CD8-positive, alpha-beta T cell (primary cell): ENCODE measurements at regions of chr20 and their contacts with region 1.

Region 1: GRCh38 chr20:7673841-7674240 is 266.4 kb downstream of the HAO1 start:
- DNase-seq: no peak
- ATAC-seq: no peak
- H3K4me3 ChIP-seq: no peak overlapping the region
- H3K4me3 Mint-ChIP-seq: no peak overlapping the region
- H3K27ac ChIP-seq: no peak overlapping the region
- H3K27ac Mint-ChIP-seq: no peak overlapping the region
- H3K4me1 ChIP-seq: no peaks in the 10 kb centered on the region
- H3K4me1 Mint-ChIP-seq: no peaks in the 10 kb centered on the region
- H3K27me3 ChIP-seq: no peaks in the 10 kb centered on the region
- H3K27me3 Mint-ChIP-seq: no peaks in the 10 kb centered on the region
- CTCF ChIP-seq: no peak

Region 2: DNA sequence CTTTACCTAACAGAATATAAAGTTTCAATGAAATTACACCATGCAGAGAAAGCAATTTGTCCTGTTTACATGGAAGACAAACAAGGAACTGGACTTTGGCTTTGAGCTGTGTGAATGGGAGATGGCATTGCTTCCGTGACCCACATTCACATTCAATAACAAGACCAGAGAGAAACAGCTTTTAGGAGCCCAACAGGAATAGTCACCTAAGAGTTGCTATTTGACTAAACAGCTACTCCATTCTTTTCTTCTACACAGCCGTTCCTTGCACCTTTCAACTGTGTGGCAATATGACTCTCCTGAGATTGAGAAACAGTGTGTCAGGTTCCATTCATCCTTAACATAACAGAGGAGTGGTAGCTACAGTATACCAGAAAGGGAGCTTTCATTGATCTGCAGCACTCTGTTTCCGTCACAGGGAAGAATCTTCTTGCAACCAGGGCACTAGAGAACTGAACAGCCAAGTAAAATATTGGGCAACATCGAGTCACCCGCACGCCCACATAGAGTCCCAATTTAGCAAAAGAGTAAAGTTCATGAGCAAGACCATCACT is 88.6 kb before region 1 on chr20:
- CTCF ChIA-PET with region 1: no interaction called
- POLR2A ChIA-PET with region 1: no interaction called
- intact Hi-C with region 1: no loop called
- DNase-seq: no peak
- ATAC-seq: no peak
- H3K4me3 ChIP-seq: no peak overlapping the region
- H3K4me3 Mint-ChIP-seq: no peak overlapping the region
- H3K27ac ChIP-seq: no peak overlapping the region
- H3K27ac Mint-ChIP-seq: no peak overlapping the region
- H3K4me1 ChIP-seq: no peaks in the 10 kb centered on the region
- H3K4me1 Mint-ChIP-seq: no peaks in the 10 kb centered on the region
- H3K27me3 ChIP-seq: no peaks in the 10 kb centered on the region
- H3K27me3 Mint-ChIP-seq: no peaks in the 10 kb centered on the region
- CTCF ChIP-seq: no peak

Region 3: GRCh38 chr20:8670893-8671215 is 997.0 kb after region 1 on chr20:
- CTCF ChIA-PET with region 1: no interaction called
- POLR2A ChIA-PET with region 1: no interaction called
- intact Hi-C with region 1: loop called in 1 of 2 experiments (anchors 5 kb)
- DNase-seq: no peak
- ATAC-seq: no peak
- H3K4me3 ChIP-seq: no peak overlapping the region
- H3K4me3 Mint-ChIP-seq: no peak overlapping the region
- H3K27ac ChIP-seq: no peak overlapping the region
- H3K27ac Mint-ChIP-seq: no peak overlapping the region
- H3K4me1 ChIP-seq: no peaks in the 10 kb centered on the region
- H3K4me1 Mint-ChIP-seq: peaks cover 10% of the 10 kb centered on the region
- H3K27me3 ChIP-seq: no peaks in the 10 kb centered on the region
- H3K27me3 Mint-ChIP-seq: no peaks in the 10 kb centered on the region
- CTCF ChIP-seq: no peak